Posterior vena cava (tissue), 2 donors: ENCODE measurements at regions of chr2 and their contacts with region 1.

Region 1: DNA sequence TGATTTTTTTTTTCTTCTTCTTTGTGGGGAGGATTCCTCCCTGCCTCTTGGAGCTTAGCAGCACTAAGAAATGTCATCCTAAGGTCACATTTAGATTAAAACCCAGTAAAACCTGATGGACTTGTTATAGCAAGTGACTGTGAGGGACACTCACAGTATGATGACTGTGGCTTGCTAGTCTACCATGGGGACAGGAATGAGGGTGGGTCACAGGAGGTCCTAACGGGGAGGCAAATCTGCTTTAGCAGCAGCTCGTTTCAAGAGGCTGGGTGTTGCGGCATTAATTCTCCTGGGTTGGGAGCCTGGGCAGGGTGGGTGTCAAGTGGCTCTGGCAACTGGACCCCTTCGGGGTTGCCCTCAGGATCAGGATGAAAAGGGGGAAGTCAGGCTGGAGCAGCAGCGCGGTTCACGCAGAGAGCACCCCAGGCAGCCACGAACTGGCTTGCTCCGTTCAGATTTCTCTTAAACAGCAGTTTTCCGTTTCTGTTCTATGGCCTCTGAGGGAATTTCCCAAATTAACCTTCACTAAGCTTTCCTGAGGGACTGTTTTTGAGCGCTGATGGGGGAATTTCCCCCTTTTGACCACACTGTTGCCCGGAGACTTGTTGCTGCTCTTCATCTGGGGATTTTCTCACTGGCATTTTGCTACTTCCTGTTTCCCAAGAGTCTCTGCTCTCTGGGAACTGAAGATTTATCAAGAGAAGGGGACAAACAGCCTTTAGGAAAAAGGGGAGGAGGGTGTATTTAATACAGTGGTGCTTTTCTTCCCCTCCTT is 59.8 kb upstream of the PELI1 start:
- DNase-seq: peak; percentile 84

Region 2: DNA sequence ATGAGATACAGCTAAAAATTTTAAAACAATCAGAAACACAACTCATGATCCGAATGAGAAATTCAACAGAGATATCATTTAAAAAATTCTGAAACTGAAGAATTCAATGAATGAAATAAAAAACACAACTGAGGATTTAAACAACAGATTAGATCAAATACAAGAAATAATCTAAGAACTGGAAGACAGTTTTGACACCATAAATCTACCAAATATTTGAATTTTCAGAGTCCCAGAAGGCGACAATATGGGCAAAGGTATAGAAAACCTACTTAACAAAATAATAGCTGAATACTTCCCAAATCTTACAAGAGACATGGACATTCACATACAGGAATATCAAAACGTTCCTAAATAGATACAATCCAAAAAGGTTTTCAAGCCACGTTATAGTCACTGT is 931.5 kb before region 1 on chr2:
- intact Hi-C with region 1: no loop called
- DNase-seq: no peak

Region 3: DNA sequence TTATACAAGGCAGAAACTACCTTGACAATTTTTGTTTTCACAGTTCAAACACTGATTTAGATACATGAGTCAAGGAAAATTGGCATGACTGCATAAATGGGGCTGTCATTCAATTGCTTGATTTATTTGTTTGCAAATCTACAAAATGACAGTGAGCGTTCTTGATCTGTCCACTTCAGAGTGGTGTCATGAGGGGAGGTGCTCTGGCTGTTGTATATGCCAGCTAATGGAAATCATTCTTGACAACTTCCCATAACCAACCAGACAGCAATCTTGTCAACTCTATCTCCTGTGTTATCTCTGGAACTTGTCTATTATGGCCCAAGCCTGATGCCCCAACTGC is 483.0 kb before region 1 on chr2:
- intact Hi-C with region 1: loop called in 1 of 2 experiments (anchors 10 kb)
- DNase-seq: no peak